ENCODE measurements at regions of chr3 and their contacts with region 1.

Region 1: GRCh38 chr3:42096796-42097565 is 5.8 kb downstream of the TRAK1 start:
- DNase-seq: peak in 29 of 42 donors; percentile 18 to 88 (median 61)

Region 2: GRCh38 chr3:41893977-41894376 is 203.0 kb before region 1 on chr3:
- intact Hi-C with region 1: loop called (anchors 5 kb)
- DNase-seq: peak in 14 of 42 donors; percentile 11 to 65 (median 36)

Region 3: GRCh38 chr3:41961750-41962679 is 135.0 kb before region 1 on chr3 and contains the start of gene ULK4:
- intact Hi-C with region 1: loop called (anchors 5 kb)
- DNase-seq: peak; percentile 94 to 99 (median 98)

Region 4: GRCh38 chr3:42061713-42062408 is 35.1 kb before region 1 on chr3:
- intact Hi-C with region 1: no loop called
- DNase-seq: no peak